HCT116 (cell line): ENCODE measurements at regions of chr7 and their contacts with region 1.

Region 1: GRCh38 chr7:30564243-30564892 is 30.3 kb upstream of the GARS1 start:
- DNase-seq: peak; percentile 78
- ATAC-seq: peak; percentile 92
- H3K4me3 ChIP-seq: no peak overlapping the region
- H3K27ac ChIP-seq: no peak overlapping the region
- H3K4me1 ChIP-seq: peaks cover 15 to 24% of the 10 kb centered on the region in 2 experiments
- H3K27me3 ChIP-seq: no peaks in the 10 kb centered on the region
- CTCF ChIP-seq: peak; percentile 82 to 87 (median 83)
- POLR2A ChIP-seq: no peak
- RAD21 ChIP-seq: peak; percentile 96

Region 2: GRCh38 chr7:30164567-30164966 is 399.8 kb before region 1 on chr7:
- CTCF ChIA-PET with region 1: interaction called, 17 read pairs
- POLR2A ChIA-PET with region 1: no interaction called
- RAD21 ChIA-PET with region 1: no interaction called
- intact Hi-C with region 1: loop called (anchors 1 kb)
- DNase-seq: peak; percentile 33
- ATAC-seq: peak; percentile 68
- H3K4me3 ChIP-seq: no peak overlapping the region
- H3K27ac ChIP-seq: no peak overlapping the region
- H3K4me1 ChIP-seq: peaks cover 0 to 12% of the 10 kb centered on the region in 2 experiments; a peak in 2 of 4 replicates
- H3K27me3 ChIP-seq: no peaks in the 10 kb centered on the region
- CTCF ChIP-seq: peak; percentile 53 to 73 (median 64); a peak in 5 of 6 replicates
- POLR2A ChIP-seq: no peak
- RAD21 ChIP-seq: peak; percentile 87

Region 3: DNA sequence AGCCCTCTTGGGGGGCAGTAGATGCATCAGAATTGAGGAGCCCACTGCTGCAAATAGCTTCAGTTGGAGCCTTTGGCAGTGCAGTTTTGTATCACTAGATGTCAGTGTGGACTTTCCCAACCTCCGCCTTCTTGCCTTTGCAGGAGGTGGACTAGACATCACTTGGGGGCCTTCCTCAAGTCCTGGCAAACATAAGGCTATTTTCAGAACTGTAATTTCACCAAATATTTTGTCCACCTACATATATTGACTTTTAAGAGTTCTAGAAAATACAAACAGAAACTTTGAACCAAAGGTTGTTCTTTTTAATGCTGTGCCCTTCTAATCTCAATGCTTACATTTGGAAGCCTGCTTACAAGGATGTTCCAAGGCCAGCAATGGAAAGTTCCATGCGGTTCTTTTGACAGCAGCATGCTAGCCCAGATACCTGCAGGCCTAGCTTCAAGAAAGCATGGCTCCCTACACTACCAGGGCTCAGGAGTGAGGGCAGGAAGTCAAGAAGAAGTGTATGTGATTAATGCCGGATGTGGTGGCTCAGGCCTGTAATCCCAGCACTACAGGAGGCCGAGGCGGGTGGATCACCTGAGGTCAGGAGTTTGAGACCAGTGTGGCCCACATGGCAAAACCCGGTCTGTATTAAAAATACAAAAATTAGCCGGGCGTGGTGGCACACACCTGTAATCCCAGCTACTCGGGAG is 288.0 kb before region 1 on chr7:
- CTCF ChIA-PET with region 1: interaction called, 34 read pairs
- POLR2A ChIA-PET with region 1: no interaction called
- RAD21 ChIA-PET with region 1: interaction called, 4 to 11 read pairs
- intact Hi-C with region 1: loop called (anchors 1 kb)
- DNase-seq: peak; percentile 43
- ATAC-seq: peak; percentile 96
- H3K4me3 ChIP-seq: no peak overlapping the region
- H3K27ac ChIP-seq: no peak overlapping the region
- H3K4me1 ChIP-seq: no peaks in the 10 kb centered on the region
- H3K27me3 ChIP-seq: no peaks in the 10 kb centered on the region
- CTCF ChIP-seq: peak; percentile 68 to 75 (median 75)
- POLR2A ChIP-seq: no peak
- RAD21 ChIP-seq: peak; percentile 89

Region 4: GRCh38 chr7:30284298-30285066 is 279.9 kb before region 1 on chr7 and contains the start of gene ZNRF2:
- CTCF ChIA-PET with region 1: no interaction called
- POLR2A ChIA-PET with region 1: no interaction called
- RAD21 ChIA-PET with region 1: no interaction called
- intact Hi-C with region 1: loop called (anchors 2 kb)
- DNase-seq: peak; percentile 97
- ATAC-seq: peak; percentile 92
- H3K4me3 ChIP-seq: peak within 1 kb of the TSS; percentile 69 to 85
- H3K27ac ChIP-seq: peak within 1 kb of the TSS; percentile 97
- H3K4me1 ChIP-seq: peaks cover 11 to 20% of the 10 kb centered on the region in 2 experiments
- H3K27me3 ChIP-seq: no peaks in the 10 kb centered on the region
- CTCF ChIP-seq: peak; percentile 18 to 39 (median 34); a peak in 4 of 6 replicates
- POLR2A ChIP-seq: peak; percentile 19
- RAD21 ChIP-seq: no peak; the same call in 1 of the 2 replicates
- total RNA-seq, gene ZNRF2: 10.2 TPM

Region 5: DNA sequence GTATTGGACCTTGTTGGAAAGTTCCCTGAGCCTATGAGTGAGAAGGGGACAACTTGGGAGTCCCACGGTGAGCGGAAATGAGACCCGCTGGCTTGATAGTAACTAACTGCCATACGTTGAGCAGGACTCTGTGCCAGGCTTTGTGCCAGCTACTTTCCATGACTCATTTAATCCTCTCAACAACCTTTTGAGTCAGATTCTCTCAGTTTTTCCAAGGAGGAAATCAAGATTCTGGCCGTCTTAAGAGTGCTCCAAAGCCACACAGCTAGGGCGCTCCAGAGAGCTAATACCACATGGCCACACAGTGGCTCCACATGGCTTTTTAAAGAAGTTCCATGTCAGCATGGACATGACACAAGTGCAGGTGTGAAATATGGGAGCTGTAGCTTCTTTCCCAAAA is 141.4 kb before region 1 on chr7:
- CTCF ChIA-PET with region 1: no interaction called
- POLR2A ChIA-PET with region 1: no interaction called
- RAD21 ChIA-PET with region 1: no interaction called
- intact Hi-C with region 1: loop called (anchors 5 kb)
- DNase-seq: peak; percentile 48
- ATAC-seq: peak; percentile 57
- H3K4me3 ChIP-seq: no peak overlapping the region
- H3K27ac ChIP-seq: no peak overlapping the region
- H3K4me1 ChIP-seq: peaks cover 0 to 14% of the 10 kb centered on the region in 2 experiments; a peak in 2 of 4 replicates
- H3K27me3 ChIP-seq: no peaks in the 10 kb centered on the region
- CTCF ChIP-seq: no peak
- POLR2A ChIP-seq: no peak
- RAD21 ChIP-seq: peak; percentile 34; the same call in 1 of the 2 replicates

Region 6: GRCh38 chr7:30510124-30511075 is 54.0 kb before region 1 on chr7:
- CTCF ChIA-PET with region 1: interaction called, 10 read pairs
- POLR2A ChIA-PET with region 1: no interaction called
- RAD21 ChIA-PET with region 1: interaction called in 1 of 2 experiments, 4 read pairs
- intact Hi-C with region 1: loop called (anchors 1 kb)
- DNase-seq: peak; percentile 36
- ATAC-seq: peak; percentile 71
- H3K4me3 ChIP-seq: no peak overlapping the region
- H3K27ac ChIP-seq: no peak overlapping the region
- H3K4me1 ChIP-seq: peaks cover 0 to 5% of the 10 kb centered on the region in 2 experiments; a peak in 1 of 4 replicates
- H3K27me3 ChIP-seq: no peaks in the 10 kb centered on the region
- CTCF ChIP-seq: peak; percentile 70 to 85 (median 71); a peak in 5 of 6 replicates
- POLR2A ChIP-seq: no peak
- RAD21 ChIP-seq: peak; percentile 68

Region 7: GRCh38 chr7:30548762-30549344 is 15.5 kb before region 1 on chr7:
- CTCF ChIA-PET with region 1: interaction called, 50 read pairs
- POLR2A ChIA-PET with region 1: interaction called, 6 read pairs
- RAD21 ChIA-PET with region 1: interaction called, 9 to 10 read pairs
- intact Hi-C with region 1: loop called (anchors 1 kb)
- DNase-seq: peak; percentile 52
- ATAC-seq: peak; percentile 77
- H3K4me3 ChIP-seq: no peak overlapping the region
- H3K27ac ChIP-seq: no peak overlapping the region
- H3K4me1 ChIP-seq: peaks cover 24 to 36% of the 10 kb centered on the region in 2 experiments
- H3K27me3 ChIP-seq: no peaks in the 10 kb centered on the region
- CTCF ChIP-seq: peak; percentile 63 to 86 (median 73); a peak in 5 of 6 replicates
- POLR2A ChIP-seq: no peak
- RAD21 ChIP-seq: peak; percentile 76

Region 8: DNA sequence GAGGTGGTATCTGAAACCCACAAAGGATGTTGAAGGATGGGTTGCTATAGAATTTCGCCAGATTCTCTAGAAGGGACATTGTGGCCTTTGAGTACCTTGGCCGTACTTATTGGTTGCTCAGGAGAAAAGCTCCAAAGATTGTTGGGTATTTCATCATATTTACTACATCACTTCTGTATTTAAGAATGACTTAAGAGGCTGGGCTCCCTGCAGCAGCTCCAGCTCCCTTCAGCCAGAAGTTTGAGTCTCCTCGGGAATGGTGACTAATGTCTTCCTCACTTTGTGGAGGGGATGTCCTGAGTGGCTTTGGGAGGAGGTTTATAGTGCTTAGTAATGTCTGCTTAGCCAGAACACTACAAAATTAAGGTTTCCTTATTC is 225.0 kb after region 1 on chr7:
- CTCF ChIA-PET with region 1: no interaction called
- POLR2A ChIA-PET with region 1: no interaction called
- RAD21 ChIA-PET with region 1: no interaction called
- intact Hi-C with region 1: no loop called
- DNase-seq: no peak
- ATAC-seq: no peak
- H3K4me3 ChIP-seq: no peak overlapping the region
- H3K27ac ChIP-seq: no peak overlapping the region
- H3K4me1 ChIP-seq: no peaks in the 10 kb centered on the region
- H3K27me3 ChIP-seq: no peaks in the 10 kb centered on the region
- CTCF ChIP-seq: no peak
- POLR2A ChIP-seq: no peak
- RAD21 ChIP-seq: no peak